Calu3 (cell line): ENCODE measurements at regions of chr1 and their contacts with region 1.

Region 1: GRCh38 chr1:154006136-154006535 is 15.6 kb downstream of the RPS27 start:
- DNase-seq: no peak
- H3K4me3 Mint-ChIP-seq: no peak overlapping the region
- H3K27ac Mint-ChIP-seq: no peak overlapping the region
- H3K4me1 Mint-ChIP-seq: peaks cover 11% of the 10 kb centered on the region
- H3K27me3 Mint-ChIP-seq: no peaks in the 10 kb centered on the region
- CTCF ChIP-seq: no peak

Region 2: DNA sequence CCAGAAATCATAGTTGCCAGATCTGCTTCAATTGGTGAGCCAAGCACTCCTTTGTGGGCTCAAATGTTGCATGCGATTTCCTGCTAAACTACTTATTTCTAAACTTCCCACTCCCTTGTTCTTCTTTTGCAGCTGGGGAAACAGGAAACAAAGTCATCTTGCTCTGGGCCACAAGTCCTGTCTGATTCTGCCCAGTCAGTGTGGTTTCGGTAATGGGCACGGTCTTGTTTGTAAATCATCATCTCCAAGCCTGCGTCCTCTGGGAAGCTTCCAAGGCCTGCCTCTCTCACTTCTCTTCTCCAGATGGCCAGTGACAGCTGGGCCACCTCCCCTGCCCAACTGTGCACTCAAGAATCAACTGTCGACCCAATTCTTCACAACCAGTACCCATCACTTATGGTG is 619.6 kb before region 1 on chr1:
- CTCF ChIA-PET with region 1: no interaction called
- intact Hi-C with region 1: no loop called
- DNase-seq: no peak
- H3K4me3 Mint-ChIP-seq: no peak overlapping the region
- H3K27ac Mint-ChIP-seq: no peak overlapping the region
- H3K4me1 Mint-ChIP-seq: no peaks in the 10 kb centered on the region
- H3K27me3 Mint-ChIP-seq: peaks cover 100% of the 10 kb centered on the region
- CTCF ChIP-seq: no peak

Region 3: GRCh38 chr1:153783233-153784190 is 222.6 kb before region 1 on chr1:
- CTCF ChIA-PET with region 1: no interaction called
- intact Hi-C with region 1: no loop called
- DNase-seq: peak; percentile 96
- H3K4me3 Mint-ChIP-seq: peak overlapping the region; percentile 76
- H3K27ac Mint-ChIP-seq: peak overlapping the region; percentile 28
- H3K4me1 Mint-ChIP-seq: peaks cover 8% of the 10 kb centered on the region
- H3K27me3 Mint-ChIP-seq: peaks cover 30% of the 10 kb centered on the region
- CTCF ChIP-seq: no peak

Region 4: DNA sequence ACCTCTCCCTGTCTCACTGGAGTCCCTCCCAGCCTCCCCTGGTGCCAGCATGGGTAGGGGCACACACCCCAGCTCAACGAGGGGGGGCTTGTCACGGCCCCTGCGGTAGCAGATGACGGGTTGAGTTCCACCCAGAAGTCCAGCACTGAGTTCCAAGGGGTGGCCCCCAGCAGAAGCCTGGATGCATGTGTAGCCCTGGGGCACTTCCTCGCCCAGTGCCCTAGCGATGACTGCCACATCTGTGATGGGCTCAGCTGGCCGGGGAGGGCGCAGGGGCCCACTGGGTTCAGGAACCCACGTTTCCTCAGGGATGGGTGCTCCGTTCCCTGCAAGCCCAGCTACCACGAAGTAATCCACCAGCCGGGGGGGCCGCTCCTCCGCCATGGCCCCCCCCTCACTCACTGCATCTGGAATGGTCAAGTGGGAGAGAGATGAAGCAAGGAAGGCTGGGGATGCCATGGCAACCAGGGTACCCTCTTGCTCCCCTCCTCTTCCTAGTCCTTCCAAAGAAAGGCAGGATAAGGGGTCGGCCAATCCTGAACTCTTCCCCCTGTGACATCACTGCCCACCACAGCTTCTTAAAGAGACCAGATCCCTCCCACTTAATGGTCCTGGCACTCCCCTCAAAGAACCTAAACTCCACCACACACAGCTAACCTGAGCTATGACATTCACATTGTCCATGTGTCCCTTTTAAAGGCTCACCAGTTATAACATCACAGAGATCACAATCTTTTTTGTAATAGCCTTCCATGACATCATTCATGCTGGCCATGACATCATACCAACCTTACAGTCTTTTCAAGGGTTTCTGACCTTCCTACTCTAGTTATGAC is 61.9 kb before region 1 on chr1:
- CTCF ChIA-PET with region 1: no interaction called
- intact Hi-C with region 1: no loop called
- DNase-seq: no peak
- H3K4me3 Mint-ChIP-seq: peak overlapping the region; percentile 86
- H3K27ac Mint-ChIP-seq: peak overlapping the region; percentile 18
- H3K4me1 Mint-ChIP-seq: peaks cover 17% of the 10 kb centered on the region
- H3K27me3 Mint-ChIP-seq: no peaks in the 10 kb centered on the region
- CTCF ChIP-seq: no peak

Region 5: DNA sequence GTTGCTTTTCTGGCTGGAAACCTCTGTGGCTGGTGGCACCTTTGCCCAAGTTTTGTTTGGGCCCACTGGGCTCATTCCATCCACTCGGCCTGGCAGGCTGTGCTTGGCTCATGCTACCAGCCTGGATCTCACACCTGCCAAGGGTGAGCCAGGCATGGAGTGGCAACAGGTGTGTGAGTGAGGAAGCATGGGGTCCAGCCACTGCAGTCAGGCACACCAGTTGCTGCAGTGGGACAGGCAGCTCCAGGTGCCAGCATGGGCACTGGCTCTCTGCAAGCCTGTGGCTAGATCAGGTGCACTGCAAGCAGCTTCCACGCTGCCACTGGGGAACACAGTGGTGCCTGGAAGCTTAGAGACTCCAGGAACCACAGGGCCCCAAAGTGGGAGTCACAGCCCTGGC is 91.7 kb after region 1 on chr1:
- CTCF ChIA-PET with region 1: no interaction called
- intact Hi-C with region 1: loop called (anchors 10 kb)
- DNase-seq: no peak
- H3K4me3 Mint-ChIP-seq: no peak overlapping the region
- H3K27ac Mint-ChIP-seq: no peak overlapping the region
- H3K4me1 Mint-ChIP-seq: no peaks in the 10 kb centered on the region
- H3K27me3 Mint-ChIP-seq: no peaks in the 10 kb centered on the region
- CTCF ChIP-seq: no peak